ENCODE measurements at regions of chr7 and their contacts with region 1.

Region 1: GRCh38 chr7:81499262-81500116 is 270.4 kb downstream of the HGF start:
- DNase-seq: peak; percentile 52 to 93
- ATAC-seq: peak; percentile 92 to 96
- H3K4me3 ChIP-seq: no peak overlapping the region
- H3K27ac ChIP-seq: peak overlapping the region; percentile 76 to 85
- H3K4me1 ChIP-seq: peaks cover 23% of the 10 kb centered on the region
- CTCF ChIP-seq: peak; percentile 96
- EP300 ChIP-seq: 0 out of 5 replicates have a peak, but pooled peaks of 1 of the 2 experiments have one; percentile 8
- POLR2A ChIP-seq: no peak
- RAD21 ChIP-seq: peak; percentile 93 to 97

Region 2: DNA sequence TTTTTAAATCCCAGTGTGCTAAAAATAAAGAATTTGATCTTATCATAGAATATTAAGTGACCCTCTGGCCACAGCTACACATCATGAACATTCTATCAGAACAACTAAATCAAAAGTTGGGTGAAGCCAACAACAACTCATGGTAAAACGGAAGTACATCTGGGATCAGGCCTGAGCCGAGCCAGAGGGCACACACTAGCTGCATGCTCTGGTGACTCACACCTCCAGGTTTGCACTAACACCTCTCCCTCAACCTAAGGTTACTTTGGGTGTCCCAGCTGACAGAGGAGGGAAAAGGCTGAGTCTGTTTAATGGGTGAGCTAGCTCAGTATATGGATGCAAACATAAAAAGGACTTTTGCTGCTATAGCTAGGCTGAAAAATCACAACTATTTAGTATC is 11.3 kb before region 1 on chr7:
- CTCF ChIA-PET with region 1: interaction called, 31 read pairs
- POLR2A ChIA-PET with region 1: no interaction called
- DNase-seq: no peak
- ATAC-seq: no peak
- H3K4me3 ChIP-seq: no peak overlapping the region
- H3K27ac ChIP-seq: no peak overlapping the region
- H3K4me1 ChIP-seq: peaks cover 25% of the 10 kb centered on the region
- CTCF ChIP-seq: no peak
- EP300 ChIP-seq: no peak
- POLR2A ChIP-seq: no peak
- RAD21 ChIP-seq: no peak

Region 3: DNA sequence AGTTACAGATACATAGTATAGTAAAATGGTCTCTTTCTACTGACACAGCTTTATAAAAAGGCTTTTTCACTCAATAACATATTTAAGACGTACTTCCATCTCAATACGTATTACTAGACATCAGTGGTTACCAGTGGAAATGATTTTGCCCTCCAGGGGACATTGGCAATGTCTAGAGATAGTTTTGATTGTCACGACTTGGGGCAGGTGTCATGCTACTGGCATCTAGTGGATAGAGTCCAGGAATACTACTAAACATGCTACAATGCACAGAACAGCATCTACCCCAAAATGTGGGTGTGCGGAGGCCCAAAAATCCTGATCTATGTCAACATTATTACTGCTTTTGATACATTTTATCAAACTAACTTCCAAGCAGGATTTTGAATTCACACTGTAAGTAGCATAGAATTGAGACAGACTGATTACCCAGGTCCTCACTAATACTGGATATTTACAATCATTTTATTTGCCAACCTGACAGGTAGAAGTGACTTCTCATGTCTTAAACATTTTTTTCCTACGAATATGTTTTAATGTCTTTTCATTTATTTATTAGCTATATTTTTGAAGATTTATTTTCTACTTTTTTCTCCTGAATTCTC is 216.6 kb after region 1 on chr7:
- CTCF ChIA-PET with region 1: interaction called, 61 read pairs
- POLR2A ChIA-PET with region 1: no interaction called
- DNase-seq: peak in 1 of 2 experiments; percentile 75
- ATAC-seq: peak; percentile 85 to 94
- H3K4me3 ChIP-seq: no peak overlapping the region
- H3K27ac ChIP-seq: no peak overlapping the region
- H3K4me1 ChIP-seq: peaks cover 9% of the 10 kb centered on the region; the same call in 2 of the 3 replicates
- CTCF ChIP-seq: peak; percentile 76
- EP300 ChIP-seq: no peak
- POLR2A ChIP-seq: no peak
- RAD21 ChIP-seq: peak; percentile 92 to 93

Region 4: DNA sequence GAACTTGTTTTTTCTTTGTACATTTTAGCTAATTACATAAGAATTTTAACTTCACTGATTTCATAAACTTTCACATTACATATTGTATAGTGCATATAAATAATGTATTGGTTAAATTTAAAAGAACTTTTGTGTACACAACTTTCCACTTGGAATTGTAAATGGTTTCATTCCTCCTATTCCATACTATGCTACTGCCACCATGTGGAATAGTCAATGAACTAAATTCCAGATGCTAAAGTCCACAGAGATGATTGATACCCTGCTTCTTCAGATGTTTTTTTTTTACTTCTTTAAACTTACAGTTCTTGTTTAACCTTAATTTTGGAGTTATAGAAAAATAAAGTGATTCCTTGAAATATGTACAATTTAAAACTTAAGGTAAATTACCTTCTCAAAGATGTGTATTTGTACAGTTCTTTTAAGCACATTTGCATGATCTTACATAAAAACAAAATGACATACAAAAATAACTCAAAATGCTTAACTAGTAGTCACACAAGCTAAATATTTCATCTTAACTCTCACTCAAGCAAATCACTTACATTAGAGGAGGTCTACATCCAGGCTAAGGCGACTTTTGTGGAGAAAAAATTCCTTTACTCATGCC is 518.0 kb after region 1 on chr7:
- CTCF ChIA-PET with region 1: interaction called, 64 read pairs
- POLR2A ChIA-PET with region 1: no interaction called
- DNase-seq: peak; percentile 32 to 47
- ATAC-seq: peak; percentile 68 to 74; a peak in 3 of 6 replicates
- H3K4me3 ChIP-seq: no peak overlapping the region
- H3K27ac ChIP-seq: peak overlapping the region in 1 of 2 experiments; percentile 23; a peak in 1 of 6 replicates
- H3K4me1 ChIP-seq: peaks cover 23% of the 10 kb centered on the region
- CTCF ChIP-seq: peak; percentile 77
- EP300 ChIP-seq: no peak
- POLR2A ChIP-seq: no peak
- RAD21 ChIP-seq: peak; percentile 82 to 84

Measured in A549 (cell line).